ENCODE measurements at regions of chr1 and their contacts with region 1.

Region 1: DNA sequence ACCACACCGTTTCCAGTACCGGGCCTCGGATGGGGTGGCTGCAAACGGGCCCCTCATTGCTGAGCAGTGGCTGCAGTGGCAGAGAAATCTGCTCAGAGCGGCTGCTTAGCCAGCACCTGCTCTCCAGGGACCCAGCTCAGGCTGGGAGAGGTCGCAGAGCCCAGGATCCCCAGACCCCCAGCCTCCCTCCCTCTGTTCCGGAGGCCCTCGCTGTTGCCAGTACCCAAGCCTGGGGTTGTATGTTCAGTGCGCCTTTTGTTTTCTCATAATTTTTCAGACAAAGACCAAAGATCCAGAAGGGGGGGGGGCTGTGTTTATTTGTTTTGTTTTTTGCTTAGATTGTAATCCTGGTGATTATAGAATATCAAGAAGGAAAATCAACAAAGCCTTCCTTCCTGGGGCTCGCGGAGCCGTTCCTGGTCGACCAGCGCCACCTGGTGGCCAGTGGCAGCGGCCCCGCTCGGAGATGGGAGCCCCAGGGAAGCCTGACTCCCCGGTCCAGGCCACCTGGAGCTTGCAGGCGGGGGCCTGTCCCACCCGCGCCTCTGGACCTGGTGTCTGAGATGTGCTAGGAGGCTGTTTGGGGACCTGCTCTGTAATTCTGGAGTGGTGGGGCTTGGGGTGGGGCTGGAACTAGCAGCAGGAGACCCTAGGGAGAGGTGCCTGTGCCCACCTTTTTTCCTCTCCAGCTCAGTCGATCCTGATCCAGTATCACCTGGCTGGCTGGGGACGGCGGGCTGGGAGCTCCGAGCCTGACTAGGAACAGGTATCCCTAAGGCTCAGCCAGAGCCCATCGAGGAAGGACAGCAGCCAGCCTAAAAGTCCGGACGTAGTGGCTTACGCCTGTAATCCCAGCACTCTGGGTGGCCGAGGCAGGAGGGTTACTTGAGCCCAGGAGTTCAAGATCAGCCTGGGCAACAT is 123.9 kb upstream of the VAMP3 start:
- DNase-seq: peak; percentile 53 to 82
- H3K4me3 ChIP-seq: no peak overlapping the region
- H3K4me1 ChIP-seq: no peaks in the 10 kb centered on the region
- H3K27me3 ChIP-seq: no peaks in the 10 kb centered on the region

Region 2: GRCh38 chr1:7070389-7071029 is 576.7 kb before region 1 on chr1:
- in situ Hi-C with region 1: loop called (anchors 25 kb)
- DNase-seq: peak; percentile 59 to 75
- H3K4me3 ChIP-seq: no peak overlapping the region
- H3K4me1 ChIP-seq: no peaks in the 10 kb centered on the region
- H3K27me3 ChIP-seq: peaks cover 8% of the 10 kb centered on the region

Region 3: DNA sequence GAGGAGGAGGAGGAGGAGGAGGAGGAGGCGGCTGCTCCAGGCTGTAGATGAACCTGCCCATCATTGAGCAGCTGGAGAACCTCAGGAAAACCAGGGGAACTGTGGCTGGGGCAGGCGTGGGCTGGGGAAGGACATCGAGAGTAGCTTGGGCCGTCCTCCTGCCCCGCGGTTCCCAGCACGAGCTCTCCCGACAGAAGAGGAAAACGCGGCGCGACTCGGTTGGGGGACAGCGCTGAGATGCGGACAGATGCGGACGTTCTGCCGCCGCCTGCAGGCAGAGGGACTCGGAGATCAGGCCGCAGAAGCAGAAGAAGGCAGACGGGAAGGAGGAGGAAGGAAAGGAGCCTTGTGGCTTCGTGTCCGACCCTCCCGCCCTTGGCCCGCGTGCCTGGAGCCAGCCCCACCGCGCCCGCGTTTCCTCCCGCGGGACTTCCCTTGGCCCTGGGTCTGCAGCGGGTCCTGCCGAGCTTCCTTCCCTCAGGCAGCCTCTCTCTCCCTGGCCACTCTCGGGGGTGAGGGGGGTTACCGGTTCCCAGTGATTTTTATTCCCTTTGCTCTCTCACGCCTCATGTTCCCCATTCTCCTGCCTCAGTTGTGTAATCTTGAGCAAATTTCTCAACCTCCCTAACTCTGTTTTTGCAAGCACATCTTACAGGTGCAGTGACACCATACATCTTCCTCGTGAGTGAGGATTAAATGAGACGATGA is 295.1 kb after region 1 on chr1:
- in situ Hi-C with region 1: no loop called
- DNase-seq: peak; percentile 55 to 72
- H3K4me3 ChIP-seq: no peak overlapping the region
- H3K4me1 ChIP-seq: peaks cover 3% of the 10 kb centered on the region
- H3K27me3 ChIP-seq: peaks cover 35% of the 10 kb centered on the region